ENCODE measurements at regions of chr15 and their contacts with region 1.

Region 1: GRCh38 chr15:98647774-98648653 is at the start of gene IGF1R:
- DNase-seq: peak; percentile 74 to 95
- H3K4me3 ChIP-seq: peak within 1 kb of the TSS; percentile 65
- CTCF ChIP-seq: no peak
- POLR2A ChIP-seq: no peak
- total RNA-seq, gene IGF1R: 59.6 to 172 (median 88.5) TPM

Region 2: DNA sequence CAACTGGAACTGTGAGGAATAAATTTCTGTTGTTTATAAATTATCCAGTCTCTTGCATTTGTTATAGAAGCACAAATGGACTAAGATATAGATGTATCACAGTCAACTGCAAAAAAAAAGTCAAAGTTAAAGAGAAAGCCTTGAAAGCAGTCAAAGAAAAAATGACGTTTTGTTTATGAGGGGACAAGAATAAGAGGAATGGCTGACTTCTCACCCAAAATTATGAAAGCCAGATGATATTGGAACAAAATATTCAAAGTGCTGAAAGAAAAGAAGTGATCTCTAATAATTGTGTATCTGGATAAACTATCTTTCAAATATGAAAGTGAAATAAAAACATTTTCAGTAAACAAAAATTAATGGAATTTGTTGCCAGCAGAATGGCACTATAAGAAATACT is 171.5 kb before region 1 on chr15:
- intact Hi-C with region 1: no loop called
- DNase-seq: no peak
- H3K4me3 ChIP-seq: no peak overlapping the region
- CTCF ChIP-seq: no peak
- POLR2A ChIP-seq: no peak

Region 3: DNA sequence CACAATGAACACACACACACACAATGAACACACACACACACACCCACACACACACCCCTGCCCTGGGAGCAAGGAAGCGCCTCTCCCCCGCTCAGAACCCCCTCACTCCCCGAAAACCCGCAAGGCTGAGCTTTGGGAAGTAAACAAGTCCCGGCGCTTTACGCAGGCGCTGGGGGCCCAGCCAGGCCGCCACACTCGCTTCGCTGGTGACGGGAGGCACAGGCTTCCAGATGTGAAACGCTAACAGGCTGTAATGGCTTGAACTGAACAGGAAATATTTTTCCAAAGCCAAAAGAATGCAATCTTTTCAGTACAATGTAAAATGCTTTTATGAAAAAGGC is 122.4 kb before region 1 on chr15:
- intact Hi-C with region 1: loop called (anchors 10 kb)
- DNase-seq: peak in 1 of 2 donors; percentile 80
- H3K4me3 ChIP-seq: no peak overlapping the region
- CTCF ChIP-seq: no peak
- POLR2A ChIP-seq: no peak